ENCODE measurements at regions of chr3 and their contacts with region 1.

Region 1: GRCh38 chr3:66047311-66048050 is 8.8 kb upstream of the MAGI1 start:
- DNase-seq: peak in 3 of 5 donors; percentile 25 to 38 (median 31)
- ATAC-seq: peak; percentile 53 to 81 (median 70)
- H3K4me3 ChIP-seq: no peak overlapping the region
- H3K27ac ChIP-seq: peak overlapping the region in 8 of 12 donors; percentile 3 to 71 (median 57)
- H3K4me1 ChIP-seq: peaks cover 0 to 15% (median 8%) of the 10 kb centered on the region in 12 donors
- H3K27me3 ChIP-seq: no peaks in the 10 kb centered on the region
- CTCF ChIP-seq: no peak
- POLR2A ChIP-seq: no peak

Region 2: GRCh38 chr3:66115858-66116654 is 68.6 kb after region 1 on chr3:
- intact Hi-C with region 1: loop called in 1 of 10 experiments (anchors 10 kb)
- DNase-seq: peak in 4 of 5 donors; percentile 49 to 66 (median 64)
- ATAC-seq: peak; percentile 84 to 95 (median 88)
- H3K4me3 ChIP-seq: no peak overlapping the region
- H3K27ac ChIP-seq: peak overlapping the region in 11 of 12 donors; percentile 46 to 84 (median 69)
- H3K4me1 ChIP-seq: peaks cover 0 to 21% (median 14%) of the 10 kb centered on the region in 12 donors
- H3K27me3 ChIP-seq: no peaks in the 10 kb centered on the region
- CTCF ChIP-seq: no peak
- POLR2A ChIP-seq: no peak

Region 3: GRCh38 chr3:66615643-66616301 is 568.3 kb after region 1 on chr3:
- intact Hi-C with region 1: no loop called
- DNase-seq: no peak
- ATAC-seq: peak; percentile 65 to 87 (median 74)
- H3K4me3 ChIP-seq: no peak overlapping the region
- H3K27ac ChIP-seq: peak overlapping the region in 2 of 12 donors; percentile 10 to 14
- H3K4me1 ChIP-seq: peaks cover 0 to 8% (median 0%) of the 10 kb centered on the region in 12 donors
- H3K27me3 ChIP-seq: no peaks in the 10 kb centered on the region
- CTCF ChIP-seq: no peak
- POLR2A ChIP-seq: no peak